ENCODE measurements at regions of chr6 and their contacts with region 1.

Region 1: DNA sequence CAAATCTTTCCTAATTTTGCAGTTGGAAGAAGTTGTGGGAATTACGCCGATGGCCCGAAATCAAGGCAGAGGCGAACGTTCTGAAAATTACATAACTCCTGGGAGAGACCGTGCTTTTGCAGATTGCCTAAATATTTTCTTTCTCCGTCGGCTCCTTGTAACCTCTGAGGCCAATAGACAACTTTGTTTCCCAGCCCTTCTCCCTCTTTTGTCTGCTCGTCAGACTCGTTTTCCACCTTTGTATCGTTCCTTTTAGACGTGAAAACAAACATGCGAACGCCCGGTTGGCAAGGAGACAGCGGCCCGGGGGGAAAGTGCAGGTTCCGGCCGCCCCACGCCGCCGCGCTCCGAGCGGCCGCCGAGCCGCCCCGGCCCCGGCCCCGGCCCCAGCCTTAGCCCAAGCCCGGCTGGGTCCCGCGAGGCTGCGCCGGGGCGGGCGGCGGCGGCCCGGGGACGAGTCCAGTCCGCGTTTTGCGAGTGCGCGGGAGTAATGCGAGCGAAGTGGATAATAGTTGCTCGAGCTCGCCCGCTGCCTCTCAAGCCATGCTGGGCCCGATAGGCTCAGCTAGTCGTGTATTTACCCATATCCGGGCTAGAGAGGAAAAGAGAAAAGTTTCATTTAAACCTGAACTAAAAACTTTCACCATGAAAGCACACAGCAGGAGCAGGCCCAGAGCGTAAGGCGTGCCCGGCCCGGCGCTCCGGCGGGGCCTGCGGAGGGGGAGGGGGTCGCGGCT is at the start of gene ARID1B:
- DNase-seq: peak; percentile 76
- H3K4me3 ChIP-seq: peak within 1 kb of the TSS; percentile 85 to 92 (median 91)
- H3K27ac ChIP-seq: peak within 1 kb of the TSS; percentile 93
- H3K4me1 ChIP-seq: peaks cover 24% of the 10 kb centered on the region
- H3K27me3 ChIP-seq: no peaks in the 10 kb centered on the region
- CTCF ChIP-seq: no peak
- total RNA-seq, gene ARID1B: 42.5 to 53.7 TPM

Region 2: GRCh38 chr6:156719720-156720563 is 57.1 kb before region 1 on chr6:
- CTCF ChIA-PET with region 1: no interaction called
- dilution Hi-C with region 1: no loop called
- in situ Hi-C with region 1: no loop called
- intact Hi-C with region 1: loop called (anchors 2 kb)
- DNase-seq: peak; percentile 93
- H3K4me3 ChIP-seq: peak overlapping the region in 2 of 3 experiments; percentile 9 to 31
- H3K27ac ChIP-seq: peak overlapping the region; percentile 76
- H3K4me1 ChIP-seq: peaks cover 30% of the 10 kb centered on the region
- H3K27me3 ChIP-seq: no peaks in the 10 kb centered on the region
- CTCF ChIP-seq: no peak

Region 3: GRCh38 chr6:156828280-156828703 is 51.3 kb after region 1 on chr6:
- CTCF ChIA-PET with region 1: no interaction called
- dilution Hi-C with region 1: no loop called
- in situ Hi-C with region 1: no loop called
- intact Hi-C with region 1: loop called (anchors 2 kb)
- DNase-seq: peak; percentile 93
- H3K4me3 ChIP-seq: no peak overlapping the region
- H3K27ac ChIP-seq: peak overlapping the region; percentile 62
- H3K4me1 ChIP-seq: peaks cover 26% of the 10 kb centered on the region
- H3K27me3 ChIP-seq: no peaks in the 10 kb centered on the region
- CTCF ChIP-seq: no peak

Region 4: DNA sequence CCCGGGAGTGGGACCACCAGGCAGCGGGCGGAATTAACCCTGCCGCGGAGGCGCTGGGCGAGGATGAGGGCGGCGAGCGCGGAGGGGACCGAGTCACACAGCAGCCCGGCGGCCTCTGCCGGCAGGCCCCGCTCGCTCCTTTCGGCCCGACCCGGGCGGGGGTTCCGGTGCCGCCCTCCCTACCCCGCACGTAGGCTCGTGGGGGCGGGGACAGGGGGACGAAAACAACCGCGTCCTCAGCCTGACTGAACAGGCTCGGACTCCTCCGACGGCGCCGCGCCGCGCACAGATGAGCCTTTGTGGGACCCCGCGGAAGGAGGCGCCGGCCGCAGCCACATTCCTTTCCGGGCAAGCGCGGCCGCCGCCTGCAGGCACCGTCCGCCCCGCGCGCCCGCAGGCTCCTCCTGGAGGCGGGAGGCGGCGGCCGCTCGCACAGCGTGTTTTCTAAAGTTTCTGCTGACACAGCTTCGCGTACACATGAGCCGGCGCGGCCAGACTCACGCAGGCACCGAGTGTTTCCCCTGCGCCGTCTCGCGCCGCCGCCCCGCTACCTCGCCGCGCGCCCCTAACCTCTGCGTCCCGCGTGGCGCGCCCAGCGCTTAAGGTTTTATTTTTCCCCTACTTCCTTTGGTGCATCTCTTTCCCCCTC is 244.5 kb after region 1 on chr6:
- CTCF ChIA-PET with region 1: interaction called, 3 read pairs
- dilution Hi-C with region 1: no loop called
- in situ Hi-C with region 1: no loop called
- intact Hi-C with region 1: loop called (anchors 1 kb)
- DNase-seq: peak; percentile 84
- H3K4me3 ChIP-seq: peak overlapping the region; percentile 72 to 87 (median 85)
- H3K27ac ChIP-seq: peak overlapping the region; percentile 97
- H3K4me1 ChIP-seq: peaks cover 17% of the 10 kb centered on the region
- H3K27me3 ChIP-seq: no peaks in the 10 kb centered on the region
- CTCF ChIP-seq: peak in 1 of 2 donors; percentile 36

Measured in mammary epithelial cell (primary cell).